ENCODE measurements at regions of chr17 and their contacts with region 1.

Region 1: DNA sequence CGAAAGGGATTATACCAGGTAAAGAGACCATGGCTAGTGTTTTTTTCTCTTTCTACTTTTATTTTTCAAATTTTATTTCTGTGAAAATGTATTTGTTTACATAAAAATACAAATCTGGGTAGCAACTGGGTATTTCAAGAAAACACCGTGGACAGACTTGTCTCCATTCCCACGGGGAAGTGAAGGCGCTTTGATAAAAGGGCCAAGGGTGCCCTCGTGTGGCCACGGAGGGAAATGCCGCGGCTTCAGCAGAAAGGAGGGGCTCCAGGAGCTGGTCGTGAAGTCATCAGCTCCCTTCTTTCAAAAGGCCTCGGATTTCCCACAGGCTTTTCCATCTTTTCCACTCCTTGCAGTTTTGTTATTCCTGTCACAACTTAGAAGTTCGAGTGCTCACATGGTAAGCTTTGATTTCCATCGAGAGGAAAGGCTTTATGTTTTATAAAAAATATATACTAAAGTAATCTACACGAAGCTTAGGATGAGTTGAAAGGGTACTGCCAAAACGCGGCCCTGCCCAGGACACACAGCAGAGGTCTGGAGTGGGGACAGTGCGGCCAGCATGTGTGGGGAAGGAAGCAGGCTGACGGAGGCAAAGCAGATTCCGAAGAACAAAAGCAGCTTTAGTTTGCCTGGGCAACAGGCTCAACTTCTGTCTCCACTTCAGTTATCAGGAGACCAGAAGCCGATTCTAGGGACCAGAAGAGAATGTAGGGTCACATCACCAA is 15.3 kb upstream of the MNT start:
- DNase-seq: no peak
- ATAC-seq: peak; percentile 93
- H3K4me3 ChIP-seq: no peak overlapping the region
- H3K27ac ChIP-seq: no peak overlapping the region
- H3K4me1 ChIP-seq: no peaks in the 10 kb centered on the region
- H3K27me3 ChIP-seq: no peaks in the 10 kb centered on the region
- CTCF ChIP-seq: peak; percentile 97
- EP300 ChIP-seq: no peak
- POLR2A ChIP-seq: no peak
- RAD21 ChIP-seq: peak; percentile 88

Region 2: GRCh38 chr17:2336215-2336851 is 79.8 kb before region 1 on chr17 and contains the start of gene TSR1:
- CTCF ChIA-PET with region 1: interaction called, 13 read pairs
- POLR2A ChIA-PET with region 1: no interaction called
- RAD21 ChIA-PET with region 1: interaction called, 5 read pairs
- SMC1A ChIA-PET with region 1: interaction called, 7 read pairs
- in situ Hi-C with region 1: no loop called
- intact Hi-C with region 1: no loop called
- DNase-seq: peak; percentile 55
- ATAC-seq: peak; percentile 94
- H3K4me3 ChIP-seq: peak within 1 kb of the TSS; percentile 92
- H3K27ac ChIP-seq: peak within 1 kb of the TSS; percentile 86
- H3K4me1 ChIP-seq: peaks cover 5% of the 10 kb centered on the region
- H3K27me3 ChIP-seq: no peaks in the 10 kb centered on the region
- CTCF ChIP-seq: peak in 2 of 3 experiments; percentile 29 to 45; a peak in 2 of 6 replicates
- EP300 ChIP-seq: no peak
- POLR2A ChIP-seq: peak; percentile 94
- RAD21 ChIP-seq: no peak
- polyA plus RNA-seq, gene TSR1: 14.7 to 21.9 TPM

Region 3: GRCh38 chr17:2380226-2380922 is 35.8 kb before region 1 on chr17:
- CTCF ChIA-PET with region 1: interaction called, 597 read pairs
- POLR2A ChIA-PET with region 1: interaction called, 15 read pairs
- RAD21 ChIA-PET with region 1: interaction called, 376 read pairs
- SMC1A ChIA-PET with region 1: interaction called, 364 read pairs
- in situ Hi-C with region 1: loop called (anchors 5 kb)
- intact Hi-C with region 1: loop called (anchors 1 kb)
- DNase-seq: no peak
- ATAC-seq: no peak
- H3K4me3 ChIP-seq: no peak overlapping the region
- H3K27ac ChIP-seq: no peak overlapping the region
- H3K4me1 ChIP-seq: no peaks in the 10 kb centered on the region
- H3K27me3 ChIP-seq: no peaks in the 10 kb centered on the region
- CTCF ChIP-seq: no peak
- EP300 ChIP-seq: no peak
- POLR2A ChIP-seq: no peak
- RAD21 ChIP-seq: no peak

Region 4: GRCh38 chr17:2392252-2393173 is 23.7 kb before region 1 on chr17:
- CTCF ChIA-PET with region 1: interaction called, 597 read pairs
- POLR2A ChIA-PET with region 1: interaction called, 4 read pairs
- RAD21 ChIA-PET with region 1: interaction called, 28 read pairs
- SMC1A ChIA-PET with region 1: interaction called, 16 read pairs
- in situ Hi-C with region 1: no loop called
- intact Hi-C with region 1: no loop called
- DNase-seq: peak; percentile 60
- ATAC-seq: peak; percentile 68
- H3K4me3 ChIP-seq: peak overlapping the region; percentile 78
- H3K27ac ChIP-seq: peak overlapping the region; percentile 86
- H3K4me1 ChIP-seq: peaks cover 27% of the 10 kb centered on the region
- H3K27me3 ChIP-seq: no peaks in the 10 kb centered on the region
- CTCF ChIP-seq: no peak
- EP300 ChIP-seq: 0 out of 4 replicates have a peak, but pooled peaks of 1 of the 2 experiments have one; percentile 24
- POLR2A ChIP-seq: peak; percentile 79
- RAD21 ChIP-seq: no peak

Region 5: DNA sequence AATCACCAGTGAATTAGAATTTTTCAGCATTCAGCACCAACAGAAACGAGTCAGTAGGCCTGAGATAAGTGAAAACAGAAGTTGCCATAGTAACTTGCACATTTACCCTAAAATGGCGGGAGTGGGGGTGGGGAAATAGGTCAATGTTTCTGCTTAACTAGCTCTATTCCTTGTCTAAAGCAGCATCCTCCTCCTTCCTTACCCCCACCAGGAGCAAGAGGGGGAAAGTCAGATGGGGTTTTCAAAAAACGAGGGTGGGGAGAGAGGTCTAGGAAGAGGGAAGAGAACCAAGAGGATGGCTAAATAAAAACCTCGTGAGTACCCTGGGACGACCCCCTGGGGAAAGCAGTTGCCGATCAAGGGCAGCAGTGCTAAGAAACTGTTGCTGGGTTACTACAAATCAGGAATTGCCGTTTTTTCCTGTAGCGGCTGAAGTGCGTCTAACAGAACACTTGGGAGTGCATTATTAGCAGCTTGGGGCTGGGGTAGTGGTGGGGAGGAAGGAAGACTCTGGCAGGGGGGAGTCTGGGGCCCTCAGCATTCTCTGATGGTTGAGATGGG is 19.1 kb after region 1 on chr17:
- CTCF ChIA-PET with region 1: interaction called, 23 read pairs
- POLR2A ChIA-PET with region 1: no interaction called
- RAD21 ChIA-PET with region 1: no interaction called
- SMC1A ChIA-PET with region 1: interaction called, 3 read pairs
- in situ Hi-C with region 1: no loop called
- intact Hi-C with region 1: no loop called
- DNase-seq: no peak
- ATAC-seq: no peak
- H3K4me3 ChIP-seq: no peak overlapping the region
- H3K27ac ChIP-seq: no peak overlapping the region
- H3K4me1 ChIP-seq: no peaks in the 10 kb centered on the region
- H3K27me3 ChIP-seq: no peaks in the 10 kb centered on the region
- CTCF ChIP-seq: no peak
- EP300 ChIP-seq: no peak
- POLR2A ChIP-seq: no peak
- RAD21 ChIP-seq: no peak

Region 6: DNA sequence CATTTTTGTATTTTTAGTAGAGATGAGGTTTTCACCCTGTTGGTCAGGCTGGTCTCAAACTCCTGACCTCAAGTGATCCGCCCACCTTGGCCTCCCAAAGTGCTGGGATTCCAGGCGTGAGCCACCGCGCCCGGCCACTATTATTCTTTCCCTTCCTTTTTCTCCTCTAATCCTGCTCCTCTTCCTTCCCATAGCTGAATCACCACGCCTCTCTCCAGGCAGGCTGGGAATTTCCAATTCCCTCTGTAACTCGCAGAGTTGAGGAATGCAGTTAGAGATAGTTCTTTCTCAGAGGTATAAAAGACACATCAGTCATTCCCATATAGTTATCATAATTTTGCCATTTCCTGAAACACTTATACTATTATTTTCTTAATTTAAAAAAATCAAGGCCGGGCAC is 84.3 kb after region 1 on chr17:
- CTCF ChIA-PET with region 1: no interaction called
- POLR2A ChIA-PET with region 1: no interaction called
- RAD21 ChIA-PET with region 1: no interaction called
- SMC1A ChIA-PET with region 1: no interaction called
- in situ Hi-C with region 1: no loop called
- intact Hi-C with region 1: no loop called
- DNase-seq: no peak
- ATAC-seq: no peak
- H3K4me3 ChIP-seq: no peak overlapping the region
- H3K27ac ChIP-seq: no peak overlapping the region
- H3K4me1 ChIP-seq: no peaks in the 10 kb centered on the region
- H3K27me3 ChIP-seq: no peaks in the 10 kb centered on the region
- CTCF ChIP-seq: no peak
- EP300 ChIP-seq: no peak
- POLR2A ChIP-seq: no peak
- RAD21 ChIP-seq: no peak

Measured in GM12878 (cell line).